Breast epithelium (tissue), 4 donors: ENCODE measurements at regions of chr12 and their contacts with region 1.

Region 1: DNA sequence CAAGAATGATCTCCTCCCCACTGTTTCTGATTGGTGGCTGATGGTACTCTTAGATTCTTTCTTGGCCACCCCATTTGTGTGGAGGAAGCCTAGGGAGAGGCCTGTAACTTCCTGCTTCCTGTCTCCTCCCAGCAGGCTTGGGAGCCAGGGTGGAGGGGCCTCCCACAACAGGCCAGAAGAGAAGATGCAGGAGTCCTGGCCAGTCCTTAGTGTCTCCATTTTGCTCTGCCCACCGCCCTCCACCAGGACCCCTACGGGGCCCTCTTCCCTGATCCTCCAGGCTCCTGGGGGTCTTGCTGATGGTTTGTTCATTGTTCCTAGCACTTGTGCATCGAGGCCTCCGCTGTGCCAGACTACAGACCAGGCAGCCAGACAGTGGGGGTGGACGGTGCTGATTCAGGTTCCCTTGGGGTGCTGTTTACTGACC is 6.8 kb downstream of the TSPAN9 start:
- DNase-seq: no peak
- H3K4me3 ChIP-seq: no peak overlapping the region
- H3K27ac ChIP-seq: peak overlapping the region; percentile 16 to 34
- H3K4me1 ChIP-seq: peaks cover 0 to 5% of the 10 kb centered on the region in 2 donors
- H3K27me3 ChIP-seq: no peaks in the 10 kb centered on the region
- CTCF ChIP-seq: no peak
- POLR2A ChIP-seq: no peak

Region 2: GRCh38 chr12:3122835-3123678 is 39.1 kb after region 1 on chr12:
- intact Hi-C with region 1: loop called (anchors 5 kb)
- DNase-seq: peak in 1 of 2 donors; percentile 51
- H3K4me3 ChIP-seq: no peak overlapping the region
- H3K27ac ChIP-seq: peak overlapping the region; percentile 69 to 70
- H3K4me1 ChIP-seq: peaks cover 12 to 32% of the 10 kb centered on the region in 2 donors
- H3K27me3 ChIP-seq: no peaks in the 10 kb centered on the region
- CTCF ChIP-seq: peak in 1 of 3 donors; percentile 8
- POLR2A ChIP-seq: no peak